ENCODE measurements at regions of chr1 and their contacts with region 1.

Region 1: DNA sequence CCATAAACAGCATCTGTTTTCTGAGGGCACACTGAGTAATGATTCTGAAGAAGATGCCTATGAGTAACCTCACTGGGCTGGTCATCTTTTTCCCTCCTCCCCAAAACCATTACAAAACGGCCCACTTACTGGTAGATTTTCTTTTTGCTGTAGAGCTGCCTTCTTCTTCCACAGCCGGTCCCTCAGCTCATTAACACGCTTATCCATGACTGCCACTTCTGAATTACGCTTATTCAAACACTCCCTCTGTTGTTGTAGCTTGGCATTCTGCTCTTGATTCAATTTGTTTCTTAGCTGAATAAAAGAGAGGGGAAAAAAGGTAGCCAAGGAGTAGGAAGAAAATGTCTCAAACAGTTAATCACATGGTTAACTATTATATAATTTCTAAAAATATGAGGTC is 43.1 kb downstream of the TP53BP2 start:
- DNase-seq: no peak
- ATAC-seq: no peak
- H3K4me3 ChIP-seq: no peak overlapping the region
- H3K27ac ChIP-seq: no peak overlapping the region
- H3K4me1 ChIP-seq: no peaks in the 10 kb centered on the region
- H3K27me3 ChIP-seq: no peaks in the 10 kb centered on the region
- CTCF ChIP-seq: no peak
- POLR2A ChIP-seq: no peak
- RAD21 ChIP-seq: no peak

Region 2: GRCh38 chr1:223500560-223501425 is 301.8 kb before region 1 on chr1:
- CTCF ChIA-PET with region 1: no interaction called
- POLR2A ChIA-PET with region 1: no interaction called
- RAD21 ChIA-PET with region 1: interaction called in 1 of 2 experiments, 10 read pairs
- intact Hi-C with region 1: no loop called
- DNase-seq: peak; percentile 22
- ATAC-seq: peak; percentile 66; the same call in 1 of the 2 replicates
- H3K4me3 ChIP-seq: no peak overlapping the region
- H3K27ac ChIP-seq: no peak overlapping the region
- H3K4me1 ChIP-seq: peaks cover 3 to 14% of the 10 kb centered on the region in 2 experiments; a peak in 2 of 4 replicates
- H3K27me3 ChIP-seq: no peaks in the 10 kb centered on the region
- CTCF ChIP-seq: no peak
- POLR2A ChIP-seq: no peak
- RAD21 ChIP-seq: no peak